Activated CD4-positive, alpha-beta T cell treated with anti-CD3 and anti-CD28 coated beads for 36 hours (primary cell): ENCODE measurements at regions of chr11 and their contacts with region 1.

Region 1: GRCh38 chr11:75280227-75280701 is 39.7 kb downstream of the TPBGL start:
- DNase-seq: peak; percentile 86
- ATAC-seq: peak; percentile 77
- H3K4me3 Mint-ChIP-seq: no peak overlapping the region
- H3K27ac Mint-ChIP-seq: peak overlapping the region; percentile 47
- H3K4me1 Mint-ChIP-seq: peaks cover 35% of the 10 kb centered on the region
- H3K27me3 Mint-ChIP-seq: no peaks in the 10 kb centered on the region

Region 2: GRCh38 chr11:74966651-74967050 is 313.6 kb before region 1 on chr11:
- CTCF ChIA-PET with region 1: no interaction called
- POLR2A ChIA-PET with region 1: no interaction called
- intact Hi-C with region 1: no loop called
- DNase-seq: no peak
- ATAC-seq: no peak
- H3K4me3 Mint-ChIP-seq: no peak overlapping the region
- H3K27ac Mint-ChIP-seq: no peak overlapping the region
- H3K4me1 Mint-ChIP-seq: peaks cover 17% of the 10 kb centered on the region
- H3K27me3 Mint-ChIP-seq: no peaks in the 10 kb centered on the region

Region 3: DNA sequence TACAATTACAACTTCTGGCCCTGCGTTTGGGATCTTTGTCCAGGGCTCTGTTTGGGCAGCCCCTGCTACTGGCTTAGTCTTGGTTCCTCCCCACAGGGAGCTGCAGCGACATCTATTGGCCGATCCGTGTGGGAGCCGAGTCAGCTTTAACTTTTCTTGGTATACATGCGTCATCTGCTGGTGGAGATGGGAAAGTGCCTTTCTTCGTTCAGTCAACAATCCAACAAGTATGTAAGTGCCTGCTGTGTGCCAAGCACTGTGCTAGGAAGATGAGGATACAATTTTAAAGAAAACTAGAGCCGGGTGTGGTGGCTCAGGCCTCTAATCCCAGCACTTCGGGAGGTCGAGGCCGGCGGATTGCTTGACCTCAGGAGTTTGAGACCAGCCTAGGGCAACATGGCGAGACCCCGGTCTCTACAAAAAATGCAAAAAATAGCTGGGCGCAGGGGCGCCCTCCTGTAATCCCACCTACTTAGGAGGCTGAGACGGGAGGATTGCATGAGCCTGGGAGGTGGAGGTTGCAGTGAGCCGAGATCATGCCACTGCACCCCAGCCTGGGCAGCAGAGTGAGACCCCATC is 31.5 kb before region 1 on chr11:
- CTCF ChIA-PET with region 1: interaction called, 11 read pairs
- POLR2A ChIA-PET with region 1: no interaction called
- intact Hi-C with region 1: no loop called
- DNase-seq: peak; percentile 93
- ATAC-seq: peak; percentile 98
- H3K4me3 Mint-ChIP-seq: no peak overlapping the region
- H3K27ac Mint-ChIP-seq: no peak overlapping the region
- H3K4me1 Mint-ChIP-seq: no peaks in the 10 kb centered on the region
- H3K27me3 Mint-ChIP-seq: no peaks in the 10 kb centered on the region

Region 4: GRCh38 chr11:75292943-75293342 is 12.7 kb after region 1 on chr11:
- CTCF ChIA-PET with region 1: interaction called, 12 read pairs
- POLR2A ChIA-PET with region 1: no interaction called
- intact Hi-C with region 1: no loop called
- DNase-seq: no peak
- ATAC-seq: no peak
- H3K4me3 Mint-ChIP-seq: no peak overlapping the region
- H3K27ac Mint-ChIP-seq: no peak overlapping the region
- H3K4me1 Mint-ChIP-seq: peaks cover 10% of the 10 kb centered on the region
- H3K27me3 Mint-ChIP-seq: no peaks in the 10 kb centered on the region

Region 5: GRCh38 chr11:75328426-75329277 is 48.4 kb after region 1 on chr11:
- CTCF ChIA-PET with region 1: interaction called, 12 read pairs
- POLR2A ChIA-PET with region 1: no interaction called
- intact Hi-C with region 1: loop called (anchors 1 to 2 kb)
- DNase-seq: peak; percentile 77
- ATAC-seq: peak; percentile 76
- H3K4me3 Mint-ChIP-seq: no peak overlapping the region
- H3K27ac Mint-ChIP-seq: peak overlapping the region; percentile 52
- H3K4me1 Mint-ChIP-seq: peaks cover 67% of the 10 kb centered on the region
- H3K27me3 Mint-ChIP-seq: no peaks in the 10 kb centered on the region

Region 6: DNA sequence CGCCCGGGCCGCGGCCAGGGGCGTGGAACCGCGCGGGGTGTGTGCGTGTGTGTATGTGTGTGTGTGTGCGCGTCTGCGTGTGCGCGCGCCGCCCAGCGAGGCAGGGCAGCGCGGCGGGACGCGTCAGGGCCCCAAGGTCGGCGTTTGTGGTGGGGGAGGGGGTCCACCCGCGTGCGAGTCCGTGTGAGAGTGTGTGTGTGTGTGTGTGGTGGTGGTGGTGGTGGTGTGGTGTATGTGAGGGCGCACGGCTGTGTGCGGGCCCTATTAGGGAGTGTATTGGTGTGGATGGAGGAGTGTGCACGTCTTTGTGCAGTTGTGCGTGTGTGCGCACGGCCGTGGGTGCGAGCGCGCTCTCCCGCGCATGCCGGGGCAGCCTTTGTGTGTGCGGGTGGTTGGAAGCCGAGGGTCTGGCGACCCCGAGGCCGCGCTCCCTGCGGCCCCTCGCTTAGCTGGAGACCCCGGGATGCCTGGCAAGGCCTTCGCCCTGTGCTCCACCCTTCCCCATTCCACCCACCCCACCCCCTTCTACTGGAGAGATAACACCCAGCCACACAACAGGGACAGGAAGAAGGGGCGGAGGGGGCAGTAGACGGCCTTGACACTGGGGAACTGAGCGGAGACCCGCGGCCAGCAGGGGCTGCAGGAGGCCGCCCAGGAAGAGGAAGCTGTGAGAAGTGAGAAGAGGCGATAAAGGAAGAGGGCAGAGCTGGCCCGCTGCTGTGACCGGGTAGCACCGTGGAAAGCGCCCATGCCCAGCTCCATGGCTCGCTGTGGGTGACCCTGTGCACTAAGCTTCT is 71.7 kb after region 1 on chr11:
- CTCF ChIA-PET with region 1: interaction called, 11 read pairs
- POLR2A ChIA-PET with region 1: no interaction called
- intact Hi-C with region 1: no loop called
- DNase-seq: peak; percentile 69
- ATAC-seq: peak; percentile 59
- H3K4me3 Mint-ChIP-seq: peak overlapping the region; percentile 84
- H3K27ac Mint-ChIP-seq: peak overlapping the region; percentile 88
- H3K4me1 Mint-ChIP-seq: peaks cover 55% of the 10 kb centered on the region
- H3K27me3 Mint-ChIP-seq: no peaks in the 10 kb centered on the region

Region 7: DNA sequence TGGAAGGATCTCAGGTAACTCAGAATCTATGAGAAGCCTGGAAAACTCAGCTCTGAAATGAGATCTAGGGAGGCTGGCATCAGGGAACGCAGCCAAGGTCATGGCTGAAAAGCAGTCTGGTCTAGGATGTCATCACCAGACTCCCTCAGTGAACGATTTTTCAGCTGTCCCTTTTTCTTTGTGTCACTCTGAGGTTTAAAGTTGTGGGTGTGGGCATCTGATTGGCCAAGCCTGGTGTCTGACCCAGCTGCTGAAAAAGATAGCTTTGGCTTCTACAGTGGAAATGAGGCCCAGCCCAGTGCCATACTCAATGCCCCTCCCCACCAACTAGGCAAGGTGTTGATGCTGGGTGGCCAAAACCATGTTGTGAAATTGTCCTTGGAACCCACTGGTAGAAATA is 133.6 kb after region 1 on chr11:
- CTCF ChIA-PET with region 1: interaction called, 13 read pairs
- POLR2A ChIA-PET with region 1: no interaction called
- intact Hi-C with region 1: no loop called
- DNase-seq: no peak
- ATAC-seq: no peak
- H3K4me3 Mint-ChIP-seq: no peak overlapping the region
- H3K27ac Mint-ChIP-seq: no peak overlapping the region
- H3K4me1 Mint-ChIP-seq: no peaks in the 10 kb centered on the region
- H3K27me3 Mint-ChIP-seq: no peaks in the 10 kb centered on the region

Region 8: DNA sequence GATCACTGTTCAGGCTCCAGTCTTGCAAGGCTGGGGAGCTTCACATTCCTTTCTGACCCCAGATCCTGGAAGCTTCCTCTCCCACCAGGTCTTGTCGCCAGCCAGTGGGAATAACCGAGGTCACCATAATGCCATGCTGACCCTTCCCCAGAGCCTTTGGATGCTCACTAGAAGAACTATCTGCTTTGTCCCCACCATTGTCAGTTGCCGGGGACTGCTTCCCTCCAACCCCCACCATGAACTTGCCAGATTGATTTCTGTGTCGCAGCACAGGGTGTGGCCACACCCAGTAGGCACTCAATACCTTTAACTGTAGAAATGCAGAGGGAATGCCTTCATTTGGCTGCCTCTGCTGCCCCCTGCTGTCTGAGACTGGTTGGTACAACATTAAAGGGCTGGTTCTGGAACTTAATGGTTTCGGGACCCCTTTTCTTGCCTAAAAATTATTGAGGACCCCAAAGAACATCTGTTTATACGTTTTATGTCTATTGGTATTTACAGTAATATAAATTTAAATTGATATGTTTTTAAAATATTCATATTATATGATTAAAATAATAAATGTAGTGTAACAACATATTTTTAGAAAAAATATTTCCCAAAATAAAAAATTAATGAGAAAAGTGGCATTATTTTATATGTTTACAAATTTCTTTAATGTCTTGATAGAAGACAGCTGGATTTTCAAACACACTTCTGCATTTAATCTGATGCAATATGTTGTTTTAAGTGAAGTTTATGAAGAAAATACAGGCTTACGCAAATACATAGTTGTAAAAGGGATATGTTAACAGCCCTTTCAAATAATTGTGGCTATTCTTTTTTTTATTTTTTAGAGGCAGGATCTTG is 252.2 kb after region 1 on chr11:
- CTCF ChIA-PET with region 1: interaction called, 6 read pairs
- POLR2A ChIA-PET with region 1: no interaction called
- intact Hi-C with region 1: loop called (anchors 2 to 10 kb)
- DNase-seq: peak; percentile 89
- ATAC-seq: peak; percentile 68
- H3K4me3 Mint-ChIP-seq: no peak overlapping the region
- H3K27ac Mint-ChIP-seq: no peak overlapping the region
- H3K4me1 Mint-ChIP-seq: peaks cover 26% of the 10 kb centered on the region
- H3K27me3 Mint-ChIP-seq: no peaks in the 10 kb centered on the region